Caco-2 (cell line): ENCODE measurements at regions of chr12 and their contacts with region 1.

Region 1: DNA sequence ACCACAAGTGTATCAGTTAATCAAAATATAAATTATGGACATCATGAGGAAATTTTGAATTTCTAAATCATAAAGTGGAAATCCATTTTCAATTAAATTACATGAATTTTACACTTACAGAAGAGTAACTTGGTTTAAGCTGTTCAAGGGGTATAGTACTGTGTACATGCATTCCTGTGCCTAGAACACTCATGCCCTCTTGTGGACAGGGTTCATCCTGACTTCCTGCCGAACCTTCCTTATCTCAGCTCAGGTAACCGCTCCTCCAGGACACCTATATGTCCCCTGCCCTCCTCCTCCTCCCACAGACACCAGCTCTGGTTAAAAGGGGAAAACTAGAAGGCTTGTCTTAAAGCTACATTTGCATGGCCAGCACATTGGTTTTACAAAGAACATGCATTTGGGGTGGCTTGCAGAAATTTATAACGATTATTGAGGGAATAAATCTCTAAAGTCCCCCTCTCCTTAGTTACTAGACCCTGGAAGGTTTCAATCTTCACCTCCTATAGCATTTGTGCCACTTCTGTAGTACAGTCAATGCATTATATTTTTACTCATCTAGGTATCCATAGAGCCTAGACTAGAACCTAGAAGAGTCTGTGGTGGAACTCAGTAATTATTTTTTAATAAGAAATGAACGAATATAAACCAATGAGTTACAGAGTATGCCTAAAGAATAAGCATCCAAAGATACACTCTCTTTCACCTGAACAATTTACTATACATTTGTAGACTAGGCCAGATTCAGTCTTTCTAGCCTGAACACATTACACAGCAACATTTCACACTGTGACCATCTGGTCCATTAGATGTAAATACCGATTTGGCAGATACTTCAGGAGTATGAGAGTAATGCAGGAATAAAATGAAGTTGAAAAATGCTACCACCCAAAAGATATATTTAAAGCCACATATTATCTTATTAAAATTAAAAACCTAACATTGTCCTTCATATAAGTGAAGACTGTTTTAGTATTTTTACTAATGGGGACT is 345.6 kb downstream of the PAWR start:
- DNase-seq: peak; percentile 70 to 71
- H3K4me3 ChIP-seq: no peak overlapping the region
- H3K4me3 Mint-ChIP-seq: no peak overlapping the region
- H3K27ac Mint-ChIP-seq: no peak overlapping the region
- H3K4me1 ChIP-seq: peaks cover 8% of the 10 kb centered on the region; the same call in 1 of the 2 replicates
- H3K4me1 Mint-ChIP-seq: no peaks in the 10 kb centered on the region
- H3K27me3 ChIP-seq: no peaks in the 10 kb centered on the region
- H3K27me3 Mint-ChIP-seq: peaks cover 2% of the 10 kb centered on the region
- CTCF ChIP-seq: peak; percentile 78 to 90

Region 2: DNA sequence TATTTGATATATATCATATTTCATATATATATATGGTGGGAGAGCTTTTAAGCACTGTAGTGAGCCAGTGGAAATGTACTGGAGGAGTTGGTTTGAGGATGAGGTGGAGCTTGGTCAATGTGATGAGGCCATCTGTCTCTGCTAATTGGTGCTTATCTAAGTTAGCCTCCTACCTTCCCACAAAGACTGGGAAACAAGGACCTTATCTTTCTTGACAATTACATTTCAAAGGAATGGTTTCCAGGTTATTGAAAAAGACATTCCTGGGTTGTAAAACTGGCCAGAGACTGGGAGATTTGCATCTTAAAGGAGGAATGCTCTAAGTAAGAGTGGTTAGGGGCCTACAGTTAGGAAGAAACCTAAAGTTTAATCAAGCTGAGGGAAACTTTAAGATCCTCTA is 693.4 kb before region 1 on chr12:
- CTCF ChIA-PET with region 1: no interaction called
- POLR2A ChIA-PET with region 1: no interaction called
- intact Hi-C with region 1: loop called (anchors 10 kb)
- DNase-seq: peak; percentile 17 to 43
- H3K4me3 ChIP-seq: no peak overlapping the region
- H3K4me3 Mint-ChIP-seq: no peak overlapping the region
- H3K27ac Mint-ChIP-seq: no peak overlapping the region
- H3K4me1 ChIP-seq: no peaks in the 10 kb centered on the region
- H3K4me1 Mint-ChIP-seq: no peaks in the 10 kb centered on the region
- H3K27me3 ChIP-seq: no peaks in the 10 kb centered on the region
- H3K27me3 Mint-ChIP-seq: no peaks in the 10 kb centered on the region
- CTCF ChIP-seq: no peak

Region 3: DNA sequence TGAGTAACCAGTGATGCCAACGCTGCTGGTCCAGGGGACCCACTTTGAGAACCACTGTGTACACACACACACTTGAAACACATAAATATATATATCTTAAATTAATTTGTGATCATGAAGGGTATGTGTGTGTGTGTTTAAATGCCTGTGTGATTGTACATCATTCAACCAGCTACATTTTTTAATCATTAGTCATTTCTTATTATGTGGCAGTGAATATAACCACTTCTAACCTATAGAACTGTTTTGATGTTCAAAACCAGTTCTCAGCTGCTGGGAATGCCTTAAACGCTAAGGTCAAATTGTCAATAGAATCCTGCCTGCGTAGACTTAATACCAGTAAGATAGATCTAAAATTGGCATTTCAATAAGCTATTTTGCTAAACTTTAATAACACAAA is 150.6 kb before region 1 on chr12:
- CTCF ChIA-PET with region 1: no interaction called
- POLR2A ChIA-PET with region 1: no interaction called
- intact Hi-C with region 1: loop called (anchors 10 kb)
- DNase-seq: no peak
- H3K4me3 ChIP-seq: no peak overlapping the region
- H3K4me3 Mint-ChIP-seq: no peak overlapping the region
- H3K27ac Mint-ChIP-seq: no peak overlapping the region
- H3K4me1 ChIP-seq: no peaks in the 10 kb centered on the region
- H3K4me1 Mint-ChIP-seq: no peaks in the 10 kb centered on the region
- H3K27me3 ChIP-seq: no peaks in the 10 kb centered on the region
- H3K27me3 Mint-ChIP-seq: no peaks in the 10 kb centered on the region
- CTCF ChIP-seq: no peak

Region 4: DNA sequence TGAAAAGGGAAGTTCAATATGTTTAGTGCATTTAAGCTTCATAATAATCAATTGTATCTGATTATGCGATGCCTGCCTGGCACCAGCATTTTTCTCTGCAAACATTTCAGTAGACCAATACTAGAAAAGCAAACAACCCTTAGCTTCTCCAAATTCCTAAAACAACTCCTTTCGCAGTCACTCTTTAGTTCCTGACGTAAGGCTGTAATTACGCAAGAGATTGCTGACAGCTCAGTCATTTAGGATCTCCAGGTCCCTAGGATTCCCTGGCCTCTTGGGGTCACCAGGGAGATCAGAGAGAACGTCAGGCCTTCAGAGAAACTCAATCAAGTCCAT is 45.0 kb before region 1 on chr12:
- CTCF ChIA-PET with region 1: no interaction called
- POLR2A ChIA-PET with region 1: no interaction called
- intact Hi-C with region 1: loop called (anchors 2 kb)
- DNase-seq: peak; percentile 65 to 66
- H3K4me3 ChIP-seq: no peak overlapping the region
- H3K4me3 Mint-ChIP-seq: no peak overlapping the region
- H3K27ac Mint-ChIP-seq: no peak overlapping the region
- H3K4me1 ChIP-seq: peaks cover 13% of the 10 kb centered on the region
- H3K4me1 Mint-ChIP-seq: no peaks in the 10 kb centered on the region
- H3K27me3 ChIP-seq: no peaks in the 10 kb centered on the region
- H3K27me3 Mint-ChIP-seq: no peaks in the 10 kb centered on the region
- CTCF ChIP-seq: no peak

Region 5: GRCh38 chr12:79356216-79356615 is 11.1 kb after region 1 on chr12:
- CTCF ChIA-PET with region 1: no interaction called
- POLR2A ChIA-PET with region 1: no interaction called
- intact Hi-C with region 1: no loop called
- DNase-seq: no peak
- H3K4me3 ChIP-seq: no peak overlapping the region
- H3K4me3 Mint-ChIP-seq: no peak overlapping the region
- H3K27ac Mint-ChIP-seq: no peak overlapping the region
- H3K4me1 ChIP-seq: no peaks in the 10 kb centered on the region
- H3K4me1 Mint-ChIP-seq: peaks cover 10% of the 10 kb centered on the region
- H3K27me3 ChIP-seq: no peaks in the 10 kb centered on the region
- H3K27me3 Mint-ChIP-seq: no peaks in the 10 kb centered on the region
- CTCF ChIP-seq: no peak

Region 6: DNA sequence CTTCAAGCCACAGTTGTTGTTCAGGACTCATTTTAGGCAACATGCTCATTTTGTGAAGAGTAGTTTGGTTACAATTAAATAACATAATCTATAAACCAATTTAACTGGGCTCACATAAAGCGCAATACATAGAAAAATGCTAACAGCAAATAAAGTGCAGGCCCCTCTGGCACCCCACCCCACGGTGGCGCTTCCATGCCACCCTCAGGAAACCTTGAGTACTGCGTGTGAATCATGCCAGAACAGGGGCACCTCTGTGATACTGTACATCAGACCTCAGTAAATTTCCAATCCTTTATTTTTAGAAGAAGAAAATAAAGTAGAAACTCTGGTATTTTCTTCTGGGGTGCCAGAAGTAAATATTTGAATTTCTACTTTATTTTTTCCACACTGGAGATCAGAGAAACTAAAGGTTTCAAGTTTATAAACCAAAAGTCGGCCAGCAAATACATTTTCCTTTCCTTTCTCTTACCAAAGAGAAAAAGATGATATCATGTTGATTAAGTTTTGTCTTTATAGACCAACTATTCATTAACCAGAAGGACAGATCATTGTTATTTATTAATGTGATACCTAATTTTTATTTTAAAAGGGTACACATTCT is 28.8 kb after region 1 on chr12:
- CTCF ChIA-PET with region 1: interaction called, 4 read pairs
- POLR2A ChIA-PET with region 1: no interaction called
- intact Hi-C with region 1: loop called (anchors 1 kb)
- DNase-seq: peak; percentile 46 to 73
- H3K4me3 ChIP-seq: no peak overlapping the region
- H3K4me3 Mint-ChIP-seq: no peak overlapping the region
- H3K27ac Mint-ChIP-seq: no peak overlapping the region
- H3K4me1 ChIP-seq: peaks cover 31% of the 10 kb centered on the region
- H3K4me1 Mint-ChIP-seq: peaks cover 37% of the 10 kb centered on the region
- H3K27me3 ChIP-seq: no peaks in the 10 kb centered on the region
- H3K27me3 Mint-ChIP-seq: no peaks in the 10 kb centered on the region
- CTCF ChIP-seq: peak; percentile 87 to 90

Region 7: DNA sequence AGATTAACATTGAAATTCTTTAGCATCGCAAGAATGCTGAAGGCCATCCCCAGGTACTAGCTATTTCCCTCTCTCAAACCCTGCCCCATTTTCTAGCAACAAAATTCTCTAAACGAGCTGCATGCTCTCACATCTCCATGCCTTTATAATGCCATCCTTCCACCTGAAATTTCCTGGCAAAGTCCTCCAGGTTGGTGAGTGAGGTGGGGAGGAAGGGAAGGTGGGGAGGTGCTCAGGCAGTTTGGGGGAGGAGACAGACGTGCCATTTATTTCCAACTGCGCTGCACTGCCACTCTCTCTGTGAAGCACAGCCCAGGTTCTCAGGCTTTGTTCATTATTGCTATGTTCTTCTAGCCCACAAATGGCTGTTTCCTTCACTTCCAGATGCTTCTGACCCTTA is 137.2 kb after region 1 on chr12:
- CTCF ChIA-PET with region 1: no interaction called
- POLR2A ChIA-PET with region 1: no interaction called
- intact Hi-C with region 1: no loop called
- DNase-seq: no peak
- H3K4me3 ChIP-seq: no peak overlapping the region
- H3K4me3 Mint-ChIP-seq: no peak overlapping the region
- H3K27ac Mint-ChIP-seq: no peak overlapping the region
- H3K4me1 ChIP-seq: peaks cover 5% of the 10 kb centered on the region; the same call in 1 of the 2 replicates
- H3K4me1 Mint-ChIP-seq: peaks cover 7% of the 10 kb centered on the region
- H3K27me3 ChIP-seq: no peaks in the 10 kb centered on the region
- H3K27me3 Mint-ChIP-seq: no peaks in the 10 kb centered on the region
- CTCF ChIP-seq: no peak

Region 8: GRCh38 chr12:79844693-79845092 is 499.5 kb after region 1 on chr12:
- CTCF ChIA-PET with region 1: no interaction called
- POLR2A ChIA-PET with region 1: no interaction called
- intact Hi-C with region 1: no loop called
- DNase-seq: peak in 1 of 2 experiments; percentile 18
- H3K4me3 ChIP-seq: no peak overlapping the region
- H3K4me3 Mint-ChIP-seq: no peak overlapping the region
- H3K27ac Mint-ChIP-seq: peak overlapping the region; percentile 33
- H3K4me1 ChIP-seq: peaks cover 12% of the 10 kb centered on the region
- H3K4me1 Mint-ChIP-seq: peaks cover 15% of the 10 kb centered on the region
- H3K27me3 ChIP-seq: no peaks in the 10 kb centered on the region
- H3K27me3 Mint-ChIP-seq: no peaks in the 10 kb centered on the region
- CTCF ChIP-seq: no peak